Activated CD8-positive, alpha-beta T cell treated with anti-CD3 and anti-CD28 coated beads for 36 hours (primary cell): ENCODE measurements at regions of chr19 and their contacts with region 1.

Region 1: DNA sequence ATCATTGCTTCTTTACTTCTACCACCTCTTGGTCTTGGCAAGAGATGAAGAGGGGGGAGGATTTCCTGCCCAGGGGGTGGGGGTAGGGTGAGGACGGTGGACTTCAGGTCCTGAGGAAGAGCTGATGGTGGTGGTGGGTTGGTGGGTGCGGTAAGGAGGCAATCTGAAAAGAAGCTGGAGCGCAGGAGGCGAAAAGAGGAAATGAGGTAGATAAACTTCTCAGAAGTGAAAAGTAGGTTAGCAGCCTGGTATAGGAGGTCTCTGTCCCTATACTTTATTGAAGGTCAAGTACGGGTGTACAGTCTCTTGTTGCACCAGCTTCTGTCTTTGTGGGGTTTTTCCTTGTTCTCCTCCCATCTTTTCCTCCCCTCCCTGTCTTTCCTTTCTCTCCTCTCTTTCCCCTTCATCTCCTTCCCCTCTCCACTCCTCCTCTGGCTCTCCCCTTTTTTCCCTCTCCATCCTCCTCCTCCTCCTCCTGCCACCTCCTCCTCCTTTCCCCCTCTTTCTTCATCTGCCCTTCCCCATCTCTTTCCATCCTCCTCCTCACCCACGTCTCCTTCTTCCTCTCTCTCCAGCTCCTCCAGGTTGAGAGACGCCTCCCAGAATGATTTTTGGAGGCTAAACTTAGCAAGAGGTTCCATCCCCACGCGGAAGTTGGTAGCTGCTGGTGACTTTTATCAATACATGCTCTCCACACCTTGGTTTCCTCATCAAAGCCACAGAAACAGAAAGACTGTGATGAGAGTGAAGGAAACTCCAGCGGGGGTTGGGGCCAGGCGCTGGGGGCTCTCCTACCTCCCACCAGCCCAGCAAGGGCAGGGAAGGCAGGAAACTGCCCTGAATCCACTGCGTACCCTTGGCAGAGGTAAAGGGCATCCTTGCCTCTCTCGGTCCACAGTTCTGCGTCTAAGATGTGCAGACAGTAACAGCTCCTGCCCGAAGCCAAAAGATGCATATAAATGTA is 15.3 kb downstream of the TNFSF14 start:
- DNase-seq: peak; percentile 88
- ATAC-seq: peak; percentile 80
- H3K4me3 Mint-ChIP-seq: peak overlapping the region; percentile 71
- H3K27ac Mint-ChIP-seq: peak overlapping the region; percentile 95
- H3K4me1 Mint-ChIP-seq: peaks cover 57% of the 10 kb centered on the region
- H3K27me3 Mint-ChIP-seq: no peaks in the 10 kb centered on the region
- CTCF ChIP-seq: no peak

Region 2: GRCh38 chr19:6602729-6603114 is 51.9 kb before region 1 on chr19:
- CTCF ChIA-PET with region 1: no interaction called
- POLR2A ChIA-PET with region 1: no interaction called
- intact Hi-C with region 1: no loop called
- DNase-seq: no peak
- ATAC-seq: no peak
- H3K4me3 Mint-ChIP-seq: no peak overlapping the region
- H3K27ac Mint-ChIP-seq: no peak overlapping the region
- H3K4me1 Mint-ChIP-seq: peaks cover 49% of the 10 kb centered on the region
- H3K27me3 Mint-ChIP-seq: no peaks in the 10 kb centered on the region
- CTCF ChIP-seq: no peak

Region 3: GRCh38 chr19:6639439-6639838 is 15.2 kb before region 1 on chr19:
- CTCF ChIA-PET with region 1: interaction called, 6 read pairs
- POLR2A ChIA-PET with region 1: interaction called, 12 read pairs
- intact Hi-C with region 1: no loop called
- DNase-seq: peak; percentile 78
- ATAC-seq: peak; percentile 88
- H3K4me3 Mint-ChIP-seq: no peak overlapping the region
- H3K27ac Mint-ChIP-seq: no peak overlapping the region
- H3K4me1 Mint-ChIP-seq: peaks cover 38% of the 10 kb centered on the region
- H3K27me3 Mint-ChIP-seq: no peaks in the 10 kb centered on the region
- CTCF ChIP-seq: no peak

Region 4: GRCh38 chr19:6674868-6675305 is 20.3 kb after region 1 on chr19:
- CTCF ChIA-PET with region 1: interaction called, 6 read pairs
- POLR2A ChIA-PET with region 1: interaction called, 14 read pairs
- intact Hi-C with region 1: no loop called
- DNase-seq: peak; percentile 98
- ATAC-seq: peak; percentile 54
- H3K4me3 Mint-ChIP-seq: peak overlapping the region; percentile 62
- H3K27ac Mint-ChIP-seq: peak overlapping the region; percentile 88
- H3K4me1 Mint-ChIP-seq: peaks cover 74% of the 10 kb centered on the region
- H3K27me3 Mint-ChIP-seq: peaks cover 2% of the 10 kb centered on the region
- CTCF ChIP-seq: no peak